PC-9 (cell line): ENCODE measurements at regions of chr5 and their contacts with region 1.

Region 1: DNA sequence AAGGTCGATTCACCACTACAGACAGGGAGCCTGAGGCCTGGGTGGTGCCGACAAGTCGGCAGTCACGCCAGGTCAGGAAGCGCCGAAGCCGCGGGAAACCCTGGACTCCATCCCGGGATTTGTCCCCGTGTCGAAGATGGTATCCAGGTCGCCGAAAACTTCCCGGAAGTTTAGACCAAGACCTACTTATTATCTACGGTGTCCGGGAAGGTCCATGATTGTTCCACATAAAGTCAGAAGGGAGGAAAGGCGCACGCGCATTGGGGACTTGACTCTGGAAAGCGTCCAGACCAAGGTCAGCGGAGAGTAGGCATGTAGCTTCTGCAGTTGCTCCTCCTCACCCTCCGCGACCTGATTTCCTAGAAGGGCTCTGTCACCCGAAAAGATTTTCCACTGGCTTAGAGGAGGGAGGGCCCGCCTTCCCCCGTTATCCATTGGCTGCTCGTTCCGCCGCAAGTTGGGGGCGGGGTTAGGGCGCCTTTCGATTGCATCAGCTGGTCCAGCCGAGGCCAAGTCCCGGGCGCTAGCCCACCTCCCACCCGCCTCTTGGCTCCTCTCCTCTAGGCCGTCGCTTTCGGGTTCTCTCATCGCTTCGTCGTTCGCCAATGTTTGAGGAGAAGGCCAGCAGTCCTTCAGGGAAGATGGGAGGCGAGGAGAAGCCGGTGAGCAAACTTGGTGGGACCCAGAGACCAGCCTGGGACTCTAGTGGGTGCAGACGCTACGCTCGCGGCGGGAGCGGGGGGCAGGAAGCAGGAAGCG is at the start of gene TARS1:
- DNase-seq: peak; percentile 100
- H3K4me3 ChIP-seq: peak within 1 kb of the TSS; percentile 88
- H3K27ac ChIP-seq: peak within 1 kb of the TSS; percentile 95
- H3K4me1 ChIP-seq: peaks cover 31% of the 10 kb centered on the region
- H3K27me3 ChIP-seq: no peaks in the 10 kb centered on the region
- CTCF ChIP-seq: no peak
- total RNA-seq, gene TARS1: 477 and 584 TPM in 2 replicates

Region 2: DNA sequence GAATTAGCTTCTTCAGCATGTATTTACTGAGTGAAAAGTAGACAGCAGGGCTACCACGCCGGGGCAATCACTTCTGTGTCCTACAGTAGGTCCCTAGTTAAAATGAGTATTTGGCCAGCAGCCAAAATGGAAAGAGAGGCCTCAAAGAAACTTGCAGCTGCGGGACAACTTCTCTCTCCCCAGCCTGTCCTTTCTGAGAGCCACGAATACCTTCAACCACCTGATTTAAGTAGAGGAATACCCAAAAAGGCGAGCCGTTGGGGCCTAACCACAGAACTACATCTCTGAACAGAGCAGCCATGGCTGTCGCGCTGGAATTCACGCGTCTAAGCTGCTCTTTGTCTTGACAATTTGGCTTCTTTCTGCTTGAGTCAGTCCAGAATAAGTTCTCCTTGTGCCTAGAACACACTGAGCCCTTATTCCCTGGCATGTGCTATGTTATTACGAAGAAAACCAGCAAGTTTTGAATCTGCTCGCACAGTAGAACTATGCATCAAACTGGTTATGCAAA is 1222.7 kb before region 1 on chr5:
- CTCF ChIA-PET with region 1: no interaction called
- POLR2A ChIA-PET with region 1: interaction called, 13 read pairs
- intact Hi-C with region 1: no loop called
- DNase-seq: peak in 1 of 2 experiments; percentile 35
- H3K4me3 ChIP-seq: no peak overlapping the region
- H3K27ac ChIP-seq: no peak overlapping the region
- H3K4me1 ChIP-seq: peaks cover 4% of the 10 kb centered on the region
- H3K27me3 ChIP-seq: no peaks in the 10 kb centered on the region
- CTCF ChIP-seq: no peak

Region 3: DNA sequence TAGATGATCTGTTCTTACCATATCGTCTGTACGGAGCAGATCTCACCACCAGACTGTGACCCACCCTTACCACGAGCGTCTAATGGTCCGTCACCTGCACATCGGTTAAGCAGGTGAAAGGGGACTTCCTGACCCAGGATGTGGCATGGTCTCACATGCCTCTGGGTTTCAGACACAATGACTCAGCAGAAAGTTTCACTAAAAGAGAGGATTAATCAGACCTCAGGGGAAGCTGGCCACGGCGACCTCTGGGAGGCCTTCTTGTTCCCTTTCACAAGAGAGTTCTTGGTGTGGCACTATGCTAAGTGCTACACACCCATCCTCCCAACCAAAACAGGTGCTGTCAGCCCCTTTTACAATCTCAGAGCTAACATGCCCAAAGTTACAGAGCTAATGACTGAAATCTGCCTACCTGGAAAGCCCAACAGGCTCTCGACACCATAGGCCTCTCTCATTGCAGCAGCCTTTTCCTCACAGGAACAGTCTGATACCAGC is 409.5 kb after region 1 on chr5:
- CTCF ChIA-PET with region 1: no interaction called
- POLR2A ChIA-PET with region 1: no interaction called
- intact Hi-C with region 1: loop called (anchors 2 kb)
- DNase-seq: peak; percentile 93 to 97
- H3K4me3 ChIP-seq: peak overlapping the region; percentile 31; the same call in 1 of the 2 replicates
- H3K27ac ChIP-seq: peak overlapping the region; percentile 88
- H3K4me1 ChIP-seq: peaks cover 55% of the 10 kb centered on the region
- H3K27me3 ChIP-seq: no peaks in the 10 kb centered on the region
- CTCF ChIP-seq: no peak

Region 4: GRCh38 chr5:33969572-33970452 is 529.2 kb after region 1 on chr5:
- CTCF ChIA-PET with region 1: interaction called, 46 read pairs
- POLR2A ChIA-PET with region 1: interaction called, 6 read pairs
- intact Hi-C with region 1: loop called (anchors 1 kb)
- DNase-seq: peak; percentile 59 to 64
- H3K4me3 ChIP-seq: no peak overlapping the region
- H3K27ac ChIP-seq: no peak overlapping the region
- H3K4me1 ChIP-seq: 0 out of 2 replicates have a peak, but pooled peaks cover 3% of the 10 kb centered on the region
- H3K27me3 ChIP-seq: no peaks in the 10 kb centered on the region
- CTCF ChIP-seq: peak; percentile 90

Region 5: DNA sequence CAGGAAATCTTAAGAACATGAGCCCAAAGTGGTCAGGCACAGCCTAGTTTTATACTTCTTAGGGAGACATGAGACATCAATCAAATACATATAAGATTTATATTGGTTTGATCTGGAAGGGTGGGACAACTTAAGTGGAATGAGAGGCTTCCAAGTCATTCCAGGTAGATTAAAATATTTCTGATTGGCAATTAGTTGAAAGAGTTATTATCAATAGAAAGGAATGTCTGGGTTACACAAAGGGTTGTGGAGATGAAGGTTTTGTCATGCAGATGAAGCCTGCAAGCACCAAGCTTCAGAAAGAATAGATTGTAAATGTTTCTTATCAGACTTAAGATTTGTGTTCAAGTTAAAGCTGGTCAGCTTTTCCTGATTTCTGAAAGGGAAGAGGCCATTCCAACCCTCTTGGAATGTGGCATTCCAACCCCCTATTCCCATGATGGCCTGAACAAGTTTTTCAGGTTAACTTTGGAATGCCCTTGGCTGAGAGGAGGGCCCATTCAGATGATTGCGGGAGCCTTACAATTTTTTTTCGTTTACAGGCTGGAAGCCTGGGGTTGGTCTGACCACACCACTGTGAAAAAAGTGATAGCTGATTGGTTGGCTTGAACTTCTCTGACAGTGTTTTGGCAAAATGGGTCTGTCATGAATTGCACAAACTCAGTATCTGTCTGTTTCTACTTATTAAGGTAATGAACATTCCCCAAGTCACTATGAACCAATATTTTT is 969.9 kb after region 1 on chr5:
- CTCF ChIA-PET with region 1: no interaction called
- POLR2A ChIA-PET with region 1: no interaction called
- intact Hi-C with region 1: no loop called
- DNase-seq: peak in 1 of 2 experiments; percentile 53
- H3K4me3 ChIP-seq: no peak overlapping the region
- H3K27ac ChIP-seq: no peak overlapping the region
- H3K4me1 ChIP-seq: peaks cover 14% of the 10 kb centered on the region; the same call in 1 of the 2 replicates
- H3K27me3 ChIP-seq: no peaks in the 10 kb centered on the region
- CTCF ChIP-seq: no peak

Region 6: DNA sequence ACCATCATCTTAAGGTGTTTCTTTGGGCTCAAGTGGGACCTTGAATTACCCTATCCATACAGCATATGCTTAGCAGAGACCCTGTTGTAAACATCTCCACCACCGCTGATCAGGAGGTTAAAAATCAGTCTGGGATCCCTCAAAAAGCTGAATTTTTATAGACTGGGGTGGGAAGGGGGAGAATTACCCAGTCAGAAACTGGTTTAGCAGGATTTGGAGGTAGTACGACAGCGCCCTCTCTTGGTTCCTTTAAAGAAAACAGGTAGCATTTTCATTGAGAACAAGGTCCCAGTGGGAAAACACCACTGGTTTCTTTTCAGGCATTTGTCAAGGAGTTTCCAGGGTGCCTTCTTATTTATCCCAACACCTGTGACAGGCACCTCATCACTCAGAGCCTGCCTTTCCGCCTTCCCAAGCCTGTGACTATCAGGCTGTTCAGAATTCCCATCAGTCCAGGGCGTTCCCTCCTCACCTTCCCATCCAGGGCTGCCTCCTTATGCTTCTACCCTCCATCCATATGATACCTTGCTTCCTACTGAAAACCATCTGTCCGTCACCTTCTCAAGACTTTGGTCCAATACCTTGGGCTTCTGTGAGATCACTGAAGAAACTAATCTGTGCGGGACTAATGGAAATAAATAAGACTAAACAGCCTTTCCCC is 1011.6 kb after region 1 on chr5:
- CTCF ChIA-PET with region 1: no interaction called
- POLR2A ChIA-PET with region 1: no interaction called
- intact Hi-C with region 1: loop called (anchors 1 kb)
- DNase-seq: peak in 1 of 2 experiments; percentile 40
- H3K4me3 ChIP-seq: no peak overlapping the region
- H3K27ac ChIP-seq: no peak overlapping the region
- H3K4me1 ChIP-seq: 0 out of 2 replicates have a peak, but pooled peaks cover 4% of the 10 kb centered on the region
- H3K27me3 ChIP-seq: peaks cover 13% of the 10 kb centered on the region; the same call in 1 of the 2 replicates
- CTCF ChIP-seq: peak; percentile 82

Region 7: GRCh38 chr5:34915139-34915855 is 1474.6 kb after region 1 on chr5 and contains the starts of genes BRIX1 and RAD1:
- CTCF ChIA-PET with region 1: no interaction called
- POLR2A ChIA-PET with region 1: interaction called, 7 read pairs
- intact Hi-C with region 1: loop called (anchors 1 kb)
- DNase-seq: peak; percentile 95 to 100
- H3K4me3 ChIP-seq: peak within 1 kb of the TSS; percentile 81
- H3K27ac ChIP-seq: peak within 1 kb of the TSS; percentile 73
- H3K4me1 ChIP-seq: peaks cover 42% of the 10 kb centered on the region
- H3K27me3 ChIP-seq: no peaks in the 10 kb centered on the region
- CTCF ChIP-seq: 0 out of 2 replicates have a peak, but pooled peaks have one; percentile 39
- total RNA-seq, gene BRIX1: 71.9 and 73.4 TPM in 2 replicates
- total RNA-seq, gene RAD1: 43.8 and 63.0 TPM in 2 replicates